IMR-90 (cell line): ENCODE measurements at regions of chr20 and their contacts with region 1.

Region 1: DNA sequence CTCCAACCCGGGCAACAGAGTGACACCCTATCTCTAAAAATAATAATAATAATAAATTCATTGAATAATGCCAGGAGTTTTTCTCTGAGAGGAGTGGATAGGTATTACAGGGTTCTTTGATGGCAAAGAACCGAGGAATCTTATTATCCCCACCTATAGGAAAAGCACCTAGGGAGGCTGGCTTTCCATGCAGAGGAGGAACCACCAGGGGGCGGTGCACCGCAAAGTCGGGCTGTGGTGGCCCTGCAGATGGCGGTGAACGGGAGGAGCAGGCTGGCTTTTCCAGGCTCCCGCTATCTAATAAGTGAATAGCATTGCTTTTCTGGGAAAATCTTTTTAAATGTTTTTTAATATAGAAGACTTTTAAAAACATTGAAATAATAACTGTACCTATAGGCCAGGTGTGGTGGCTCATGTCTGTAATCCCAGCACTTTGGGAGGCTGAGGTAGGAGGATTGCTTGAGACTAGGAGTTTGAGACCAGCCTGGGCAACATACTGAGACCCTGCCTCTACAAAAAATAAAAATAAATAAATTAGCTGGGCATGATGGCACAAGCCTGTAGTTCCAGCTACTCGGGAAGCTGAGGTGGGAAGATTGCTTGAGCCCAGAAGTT is 864.2 kb downstream of the KIF16B start:
- DNase-seq: no peak
- ATAC-seq: no peak
- H3K4me3 ChIP-seq: no peak overlapping the region
- H3K27ac ChIP-seq: no peak overlapping the region
- H3K4me1 ChIP-seq: no peaks in the 10 kb centered on the region
- H3K27me3 ChIP-seq: no peaks in the 10 kb centered on the region
- CTCF ChIP-seq: peak; percentile 27; the same call in 1 of the 2 replicates
- POLR2A ChIP-seq: no peak
- RAD21 ChIP-seq: no peak

Region 2: GRCh38 chr20:15005300-15005986 is 703.6 kb before region 1 on chr20:
- CTCF ChIA-PET with region 1: no interaction called
- POLR2A ChIA-PET with region 1: no interaction called
- dilution Hi-C with region 1: no loop called
- in situ Hi-C with region 1: no loop called
- intact Hi-C with region 1: no loop called
- DNase-seq: no peak
- ATAC-seq: no peak
- H3K4me3 ChIP-seq: no peak overlapping the region
- H3K27ac ChIP-seq: no peak overlapping the region
- H3K4me1 ChIP-seq: no peaks in the 10 kb centered on the region
- H3K27me3 ChIP-seq: no peaks in the 10 kb centered on the region
- CTCF ChIP-seq: no peak
- POLR2A ChIP-seq: no peak
- RAD21 ChIP-seq: no peak

Region 3: GRCh38 chr20:15776770-15777466 is 67.8 kb after region 1 on chr20:
- CTCF ChIA-PET with region 1: no interaction called
- POLR2A ChIA-PET with region 1: no interaction called
- dilution Hi-C with region 1: no loop called
- in situ Hi-C with region 1: no loop called
- intact Hi-C with region 1: no loop called
- DNase-seq: no peak
- ATAC-seq: no peak
- H3K4me3 ChIP-seq: no peak overlapping the region
- H3K27ac ChIP-seq: no peak overlapping the region
- H3K4me1 ChIP-seq: no peaks in the 10 kb centered on the region
- H3K27me3 ChIP-seq: no peaks in the 10 kb centered on the region
- CTCF ChIP-seq: no peak
- POLR2A ChIP-seq: no peak
- RAD21 ChIP-seq: no peak

Region 4: DNA sequence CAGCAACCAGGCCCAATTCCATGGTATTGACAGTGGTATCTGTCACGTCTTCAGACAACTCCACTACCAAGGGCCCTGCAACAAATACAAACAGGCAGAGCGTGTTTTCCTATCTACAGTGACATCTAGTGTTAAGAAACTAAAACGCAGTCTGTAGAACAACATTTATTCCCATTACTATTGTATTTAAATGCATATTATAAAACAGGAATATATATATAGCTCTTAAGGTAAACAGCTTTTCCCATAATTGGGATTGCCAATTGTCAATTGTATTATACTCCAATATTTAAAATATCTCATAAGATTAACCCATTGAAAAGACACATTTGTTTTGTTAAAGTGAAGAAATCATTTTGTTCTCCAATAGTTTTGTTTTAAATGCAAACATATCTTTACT is 766.9 kb after region 1 on chr20:
- CTCF ChIA-PET with region 1: no interaction called
- POLR2A ChIA-PET with region 1: no interaction called
- dilution Hi-C with region 1: no loop called
- in situ Hi-C with region 1: no loop called
- intact Hi-C with region 1: loop called (anchors 1 kb)
- DNase-seq: peak; percentile 62
- ATAC-seq: peak; percentile 64
- H3K4me3 ChIP-seq: no peak overlapping the region
- H3K27ac ChIP-seq: no peak overlapping the region
- H3K4me1 ChIP-seq: peaks cover 9% of the 10 kb centered on the region
- H3K27me3 ChIP-seq: no peaks in the 10 kb centered on the region
- CTCF ChIP-seq: peak; percentile 70
- POLR2A ChIP-seq: no peak
- RAD21 ChIP-seq: peak; percentile 70